ENCODE measurements at regions of chr6 and their contacts with region 1.

Region 1: GRCh38 chr6:33771146-33772081 is 17.5 kb downstream of the LEMD2 start:
- DNase-seq: peak; percentile 96
- ATAC-seq: peak; percentile 81
- H3K4me3 ChIP-seq: no peak overlapping the region
- H3K27ac ChIP-seq: peak overlapping the region; percentile 98
- H3K4me1 ChIP-seq: peaks cover 49% of the 10 kb centered on the region
- H3K27me3 ChIP-seq: no peaks in the 10 kb centered on the region
- CTCF ChIP-seq: peak; percentile 98
- POLR2A ChIP-seq: no peak
- RAD21 ChIP-seq: peak; percentile 90

Region 2: GRCh38 chr6:33711140-33712129 is 60.0 kb before region 1 on chr6 and contains the start of gene UQCC2:
- CTCF ChIA-PET with region 1: interaction called, 11 read pairs
- POLR2A ChIA-PET with region 1: no interaction called
- dilution Hi-C with region 1: no loop called
- in situ Hi-C with region 1: no loop called
- intact Hi-C with region 1: loop called (anchors 2 kb)
- DNase-seq: peak; percentile 95
- ATAC-seq: peak; percentile 99
- H3K4me3 ChIP-seq: peak within 1 kb of the TSS; percentile 73
- H3K27ac ChIP-seq: peak within 1 kb of the TSS; percentile 95
- H3K4me1 ChIP-seq: peaks cover 5% of the 10 kb centered on the region
- H3K27me3 ChIP-seq: peaks cover 5% of the 10 kb centered on the region; the same call in 1 of the 2 replicates
- CTCF ChIP-seq: peak; percentile 90
- POLR2A ChIP-seq: peak; percentile 95
- RAD21 ChIP-seq: peak; percentile 86
- total RNA-seq, gene UQCC2: 13.8 and 23.1 TPM in 2 replicates

Region 3: DNA sequence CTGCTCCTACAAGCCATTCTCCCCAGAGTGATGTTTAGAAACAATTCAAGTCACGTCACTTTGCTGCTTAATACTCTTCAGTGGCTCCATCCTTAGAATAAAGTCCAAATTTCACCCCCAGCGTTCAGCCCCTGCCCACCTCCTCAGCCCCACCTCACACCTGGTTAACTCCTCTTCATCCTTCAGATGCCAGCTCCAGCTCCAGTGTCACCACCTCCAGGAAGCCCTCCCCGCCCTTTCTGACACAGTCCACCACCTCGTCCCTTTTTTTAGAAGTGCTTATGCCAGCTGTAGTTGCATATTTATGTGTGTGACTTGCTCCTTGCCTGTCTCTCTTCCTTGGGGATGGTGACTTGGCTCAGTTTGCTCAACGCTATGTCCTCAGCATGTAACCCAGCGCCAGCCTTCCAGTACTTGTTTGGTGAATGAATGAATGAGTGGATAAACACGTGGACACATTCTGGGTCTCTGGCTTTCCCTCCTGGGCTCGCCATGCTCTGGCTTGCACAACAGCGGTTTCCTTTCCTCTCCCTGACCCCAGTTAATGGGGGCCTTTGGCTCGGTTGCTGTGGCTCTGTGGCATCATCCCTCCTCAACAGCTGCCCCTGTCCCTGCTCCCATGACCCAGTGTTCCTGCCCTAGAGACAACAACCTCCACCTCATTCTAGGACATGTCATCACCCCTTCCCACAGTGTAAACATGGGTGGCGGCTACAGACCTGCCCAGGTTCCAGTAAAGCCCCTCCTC is 21.0 kb before region 1 on chr6:
- CTCF ChIA-PET with region 1: interaction called, 17 read pairs
- POLR2A ChIA-PET with region 1: no interaction called
- dilution Hi-C with region 1: no loop called
- in situ Hi-C with region 1: no loop called
- intact Hi-C with region 1: loop called (anchors 2 kb)
- DNase-seq: no peak
- ATAC-seq: no peak
- H3K4me3 ChIP-seq: no peak overlapping the region
- H3K27ac ChIP-seq: no peak overlapping the region
- H3K4me1 ChIP-seq: peaks cover 36% of the 10 kb centered on the region
- H3K27me3 ChIP-seq: no peaks in the 10 kb centered on the region
- CTCF ChIP-seq: no peak
- POLR2A ChIP-seq: no peak
- RAD21 ChIP-seq: no peak

Region 4: DNA sequence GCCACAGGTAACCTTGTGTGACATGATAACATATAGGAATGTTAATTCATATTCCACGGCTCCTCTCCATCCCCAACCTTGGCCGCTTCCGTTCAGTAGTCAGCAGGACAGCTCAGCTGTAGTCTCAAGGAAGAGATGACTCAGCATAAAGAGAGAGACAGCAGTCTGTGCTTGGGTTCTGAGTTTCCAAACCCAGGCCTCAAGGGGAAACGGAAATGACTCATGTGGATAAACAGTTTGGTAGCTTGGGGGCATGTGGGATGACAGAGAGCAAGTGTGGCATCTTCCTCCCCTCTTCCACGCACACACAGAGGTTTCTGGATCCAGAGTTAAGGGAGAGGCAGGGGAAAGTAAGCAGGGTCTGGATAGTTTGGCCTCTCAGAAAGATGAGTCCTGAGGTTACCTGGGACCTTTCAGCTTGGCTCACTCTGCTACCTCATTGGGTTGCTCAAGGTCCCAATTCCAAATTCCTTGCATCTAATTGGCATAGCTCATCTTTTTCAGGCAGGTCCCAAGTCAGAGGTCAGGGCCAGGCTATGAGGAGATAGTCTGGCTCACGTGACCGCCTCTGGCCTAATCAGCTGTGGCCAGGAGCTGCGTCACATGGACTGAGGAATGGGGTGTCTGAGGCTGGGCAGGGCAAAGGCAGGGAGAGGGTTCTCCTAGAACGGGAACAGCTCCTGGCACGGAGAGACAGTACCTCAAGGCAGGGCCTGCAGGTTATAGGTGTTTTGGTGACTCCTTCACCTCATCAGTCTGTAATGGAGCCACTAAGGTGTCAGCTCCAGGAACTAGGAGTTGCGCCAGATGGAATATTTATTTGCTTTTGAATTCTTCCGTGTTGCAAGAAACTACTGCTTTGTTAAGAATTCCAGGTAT is 68.9 kb after region 1 on chr6:
- CTCF ChIA-PET with region 1: interaction called, 5 read pairs
- POLR2A ChIA-PET with region 1: no interaction called
- dilution Hi-C with region 1: no loop called
- in situ Hi-C with region 1: no loop called
- intact Hi-C with region 1: loop called (anchors 2 kb)
- DNase-seq: peak; percentile 98
- ATAC-seq: peak; percentile 85
- H3K4me3 ChIP-seq: no peak overlapping the region
- H3K27ac ChIP-seq: peak overlapping the region; percentile 94
- H3K4me1 ChIP-seq: peaks cover 40% of the 10 kb centered on the region
- H3K27me3 ChIP-seq: no peaks in the 10 kb centered on the region
- CTCF ChIP-seq: no peak
- POLR2A ChIP-seq: no peak
- RAD21 ChIP-seq: no peak

Region 5: DNA sequence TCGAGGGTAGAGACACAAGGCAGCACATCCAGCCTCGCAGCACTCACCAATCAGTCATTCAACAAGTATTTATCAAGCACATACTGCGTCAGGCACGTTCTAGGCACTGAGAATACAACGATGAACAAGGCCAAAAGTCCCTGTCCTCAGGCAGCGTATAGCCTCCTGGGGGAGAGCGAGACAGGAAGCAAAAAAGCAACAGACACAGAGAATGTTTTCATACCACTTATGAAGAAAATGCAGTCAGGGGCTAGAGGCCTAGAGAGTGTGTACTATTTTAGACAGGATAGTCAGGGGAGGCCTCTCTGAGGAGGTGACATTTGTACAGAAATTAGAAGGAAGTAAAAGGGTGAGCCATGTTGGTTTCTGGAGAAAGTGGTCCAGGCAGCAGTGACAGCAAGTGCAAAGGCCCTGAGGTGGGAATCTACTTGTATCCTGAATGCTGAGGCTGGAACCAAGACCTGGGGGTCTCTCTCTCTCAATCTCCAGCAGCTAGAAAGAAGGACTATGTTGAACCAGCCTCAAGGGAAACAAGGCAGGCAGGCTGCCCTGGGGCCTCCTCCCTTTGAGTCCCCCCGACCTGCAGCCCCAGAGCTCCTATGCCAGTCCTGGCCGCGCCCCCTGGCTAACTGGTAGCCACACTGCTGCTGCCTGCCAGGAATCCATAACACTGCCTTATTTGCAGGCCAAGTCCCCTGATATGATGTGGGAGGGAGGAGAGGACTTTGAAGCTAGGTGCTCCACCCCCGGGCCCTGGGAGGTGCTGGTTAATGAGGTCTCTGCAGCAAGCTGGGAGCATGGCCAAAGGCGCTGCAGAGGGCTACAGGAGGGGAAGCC is 223.3 kb after region 1 on chr6:
- CTCF ChIA-PET with region 1: no interaction called
- POLR2A ChIA-PET with region 1: no interaction called
- dilution Hi-C with region 1: no loop called
- in situ Hi-C with region 1: no loop called
- intact Hi-C with region 1: no loop called
- DNase-seq: no peak
- ATAC-seq: no peak
- H3K4me3 ChIP-seq: no peak overlapping the region
- H3K27ac ChIP-seq: no peak overlapping the region
- H3K4me1 ChIP-seq: no peaks in the 10 kb centered on the region
- H3K27me3 ChIP-seq: peaks cover 30% of the 10 kb centered on the region
- CTCF ChIP-seq: no peak
- POLR2A ChIP-seq: no peak
- RAD21 ChIP-seq: no peak

Region 6: DNA sequence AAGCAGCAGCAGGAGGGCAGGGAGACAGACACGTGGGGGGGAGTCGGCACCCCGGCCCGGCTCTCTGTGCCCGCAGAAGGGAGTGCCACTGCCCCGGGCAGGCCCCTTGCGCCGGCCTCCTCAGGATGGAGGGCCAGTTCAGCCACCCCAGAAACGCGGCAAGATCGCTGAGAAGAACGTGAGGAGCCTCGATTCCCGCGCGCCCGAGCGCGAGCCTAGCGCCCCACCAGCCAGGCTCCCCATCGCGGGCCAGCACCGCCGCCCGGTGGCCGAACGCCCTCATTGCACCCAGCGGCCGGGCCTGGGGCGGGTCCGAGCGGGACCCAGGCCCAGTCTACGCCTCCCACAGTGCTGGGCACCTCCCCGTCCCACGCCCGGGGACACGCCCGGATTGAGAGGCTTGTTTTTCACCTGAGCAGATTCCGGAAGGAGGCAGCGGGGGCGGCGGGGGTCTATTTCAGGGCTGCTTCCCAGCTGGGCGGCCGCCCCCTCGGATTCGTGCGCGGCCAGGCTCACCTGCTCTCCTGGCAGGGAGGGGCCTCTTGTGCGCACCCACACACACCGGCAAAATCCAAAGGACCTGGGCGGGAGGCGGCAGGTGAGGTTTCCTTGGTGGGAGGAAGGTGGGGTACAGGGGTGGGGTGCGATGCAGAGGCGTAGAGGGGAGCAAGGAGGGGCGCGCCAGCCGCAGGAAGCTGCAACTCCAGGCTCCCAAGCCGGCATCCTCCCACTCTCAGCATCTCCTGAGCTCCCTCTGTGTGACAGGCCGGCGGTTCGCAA is 383.4 kb after region 1 on chr6:
- CTCF ChIA-PET with region 1: interaction called, 4 read pairs
- POLR2A ChIA-PET with region 1: no interaction called
- dilution Hi-C with region 1: no loop called
- in situ Hi-C with region 1: loop called (anchors 10 kb)
- intact Hi-C with region 1: loop called (anchors 1 kb)
- DNase-seq: peak; percentile 26
- ATAC-seq: peak; percentile 97
- H3K4me3 ChIP-seq: no peak overlapping the region
- H3K27ac ChIP-seq: no peak overlapping the region
- H3K4me1 ChIP-seq: no peaks in the 10 kb centered on the region
- H3K27me3 ChIP-seq: peaks cover 61% of the 10 kb centered on the region
- CTCF ChIP-seq: peak; percentile 96
- POLR2A ChIP-seq: 0 out of 2 replicates have a peak, but pooled peaks have one; percentile 47
- RAD21 ChIP-seq: peak; percentile 97